WTC11 (cell line): ENCODE measurements at regions of chr6 and their contacts with region 1.

Region 1: DNA sequence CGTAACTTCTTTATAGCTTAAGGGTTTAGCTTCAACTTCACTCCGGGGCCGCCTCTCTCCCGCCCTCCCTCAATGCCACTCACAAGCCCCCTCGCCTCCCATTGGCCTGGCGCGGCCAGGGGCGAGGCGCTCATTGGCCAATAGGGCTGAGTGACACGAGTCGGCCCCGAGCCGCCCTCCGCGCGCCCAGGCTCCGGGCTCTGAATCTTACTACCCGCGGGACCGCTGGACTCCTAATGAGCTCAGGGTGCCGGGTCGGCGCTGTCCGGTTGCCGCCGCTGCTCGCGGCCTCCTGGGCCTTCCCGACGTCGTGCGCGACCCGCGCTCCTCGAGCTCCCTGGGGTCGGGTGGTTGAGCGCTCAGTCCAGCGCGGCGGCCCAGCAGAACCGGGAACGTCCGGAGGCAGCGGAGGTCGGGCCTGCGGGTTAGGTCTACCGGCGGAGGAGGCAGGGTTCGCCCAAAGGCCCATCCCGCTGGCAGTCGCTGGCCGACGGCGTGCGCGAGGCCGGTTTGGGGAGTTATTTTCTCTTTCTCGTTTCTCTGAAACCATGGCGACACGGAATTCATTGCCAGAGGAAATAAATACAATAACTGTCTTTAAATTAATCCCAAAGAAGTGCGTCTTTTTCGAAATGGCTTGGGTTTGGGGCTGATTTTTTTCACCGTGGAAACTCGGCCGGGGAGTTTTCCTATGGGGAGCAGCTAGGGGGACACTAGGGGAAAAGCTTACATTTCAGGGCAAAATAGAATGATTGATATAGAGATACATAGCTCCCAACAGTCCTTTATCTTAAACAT is at the start of gene SIM1:
- DNase-seq: peak; percentile 93
- ATAC-seq: peak; percentile 89
- H3K4me3 Mint-ChIP-seq: peak within 1 kb of the TSS; percentile 71
- H3K27ac Mint-ChIP-seq: no peak within 1 kb of the TSS
- H3K4me1 Mint-ChIP-seq: peaks cover 68% of the 10 kb centered on the region
- H3K27me3 Mint-ChIP-seq: no peaks in the 10 kb centered on the region; the same call in 1 of the 2 replicates
- CTCF ChIP-seq: no peak
- total RNA-seq, gene SIM1: 0.09 to 0.11 TPM (median 0.11 TPM) in 3 replicates

Region 2: DNA sequence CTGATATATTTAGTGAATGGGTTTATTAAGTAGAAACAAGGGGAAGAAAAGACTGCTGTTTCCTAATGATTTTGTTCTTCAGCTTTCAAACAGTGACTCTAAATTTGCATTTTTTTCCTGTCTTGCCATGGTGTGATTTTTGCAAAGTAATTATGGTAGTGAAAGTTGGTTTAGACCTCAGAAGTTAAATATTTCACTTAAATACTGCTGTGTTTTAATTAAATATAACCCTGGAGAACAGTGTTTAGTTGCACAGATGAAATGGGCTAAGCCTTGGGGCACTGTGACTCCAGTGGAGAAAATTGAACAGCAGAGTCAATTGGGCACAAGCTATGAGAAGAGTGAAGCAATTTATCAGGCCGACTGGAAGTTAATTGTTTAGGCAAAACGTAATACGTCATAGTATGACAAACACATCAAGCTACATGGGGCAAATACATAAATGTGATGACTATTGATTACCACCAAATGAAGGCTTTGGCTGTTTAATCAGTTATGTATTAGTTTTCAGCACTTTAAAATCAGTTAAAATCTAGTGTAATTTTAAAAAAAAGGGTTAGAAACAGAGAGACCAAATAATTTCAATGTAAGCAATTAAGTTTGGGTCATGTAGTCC is 359.9 kb before region 1 on chr6:
- CTCF ChIA-PET with region 1: interaction called, 19 read pairs
- POLR2A ChIA-PET with region 1: no interaction called
- DNase-seq: no peak
- ATAC-seq: no peak
- H3K4me3 Mint-ChIP-seq: no peak overlapping the region
- H3K27ac Mint-ChIP-seq: no peak overlapping the region
- H3K4me1 Mint-ChIP-seq: peaks cover 17% of the 10 kb centered on the region
- H3K27me3 Mint-ChIP-seq: no peaks in the 10 kb centered on the region
- CTCF ChIP-seq: no peak

Region 3: GRCh38 chr6:100176311-100176950 is 288.7 kb before region 1 on chr6:
- CTCF ChIA-PET with region 1: interaction called, 12 read pairs
- POLR2A ChIA-PET with region 1: no interaction called
- DNase-seq: no peak
- ATAC-seq: peak; percentile 75
- H3K4me3 Mint-ChIP-seq: no peak overlapping the region
- H3K27ac Mint-ChIP-seq: no peak overlapping the region
- H3K4me1 Mint-ChIP-seq: peaks cover 42% of the 10 kb centered on the region
- H3K27me3 Mint-ChIP-seq: no peaks in the 10 kb centered on the region
- CTCF ChIP-seq: no peak

Region 4: GRCh38 chr6:100420711-100421110 is 44.4 kb before region 1 on chr6:
- CTCF ChIA-PET with region 1: interaction called, 10 read pairs
- POLR2A ChIA-PET with region 1: no interaction called
- DNase-seq: peak; percentile 22
- ATAC-seq: peak; percentile 99
- H3K4me3 Mint-ChIP-seq: peak overlapping the region; percentile 14; the same call in 1 of the 2 replicates
- H3K27ac Mint-ChIP-seq: no peak overlapping the region
- H3K4me1 Mint-ChIP-seq: peaks cover 25% of the 10 kb centered on the region
- H3K27me3 Mint-ChIP-seq: no peaks in the 10 kb centered on the region
- CTCF ChIP-seq: no peak

Region 5: GRCh38 chr6:100475554-100475953 is 10.5 kb after region 1 on chr6:
- CTCF ChIA-PET with region 1: interaction called, 26 read pairs
- POLR2A ChIA-PET with region 1: no interaction called
- DNase-seq: no peak
- ATAC-seq: no peak
- H3K4me3 Mint-ChIP-seq: no peak overlapping the region
- H3K27ac Mint-ChIP-seq: no peak overlapping the region
- H3K4me1 Mint-ChIP-seq: no peaks in the 10 kb centered on the region
- H3K27me3 Mint-ChIP-seq: peaks cover 3% of the 10 kb centered on the region
- CTCF ChIP-seq: no peak

Region 6: DNA sequence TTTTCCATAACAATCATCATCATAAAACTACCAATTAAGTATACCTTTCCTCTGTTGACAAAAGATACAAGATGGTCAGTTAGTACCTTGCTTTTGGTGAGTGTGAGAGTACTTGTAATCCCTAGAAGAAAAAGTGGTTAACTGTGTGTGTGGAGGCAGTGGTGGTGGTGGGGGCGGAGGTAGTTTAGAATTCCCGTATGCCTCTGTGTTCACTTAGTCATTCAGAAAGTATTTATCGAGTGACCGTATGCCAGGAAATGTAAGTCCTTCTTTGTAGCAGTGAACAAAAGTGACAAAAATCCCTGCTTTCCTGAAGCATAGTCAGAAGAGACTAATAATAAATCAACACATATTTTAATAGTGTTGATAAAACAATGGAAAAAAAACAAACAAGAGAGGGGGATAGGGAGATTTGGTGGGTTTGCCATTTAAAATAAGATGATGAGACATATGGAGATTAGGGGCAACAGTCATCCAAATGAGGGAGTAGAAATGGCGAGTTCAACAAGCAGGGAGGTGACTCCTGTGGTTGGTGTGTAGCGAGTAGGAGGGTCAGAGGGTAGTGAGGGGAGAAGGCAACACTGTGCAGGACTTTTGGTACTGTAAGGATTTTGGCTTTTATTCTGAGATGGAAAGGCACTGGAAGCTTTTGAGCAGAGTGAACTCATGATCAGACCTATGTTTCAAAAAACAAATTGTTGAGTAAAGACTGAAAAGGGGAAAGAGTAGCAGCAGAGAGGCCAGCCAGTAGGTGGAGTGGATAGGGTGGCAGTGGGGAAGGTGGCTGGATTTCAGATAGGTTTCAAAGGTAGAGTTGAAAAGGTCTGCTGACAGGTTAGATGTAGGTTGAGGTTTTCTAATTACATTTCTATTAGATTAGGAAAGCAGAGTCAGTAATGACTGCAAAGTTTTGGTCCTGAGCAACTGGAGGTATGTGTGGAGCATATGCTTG is 40.0 kb after region 1 on chr6:
- CTCF ChIA-PET with region 1: no interaction called
- POLR2A ChIA-PET with region 1: no interaction called
- DNase-seq: no peak
- ATAC-seq: peak; percentile 74
- H3K4me3 Mint-ChIP-seq: no peak overlapping the region
- H3K27ac Mint-ChIP-seq: no peak overlapping the region
- H3K4me1 Mint-ChIP-seq: no peaks in the 10 kb centered on the region
- H3K27me3 Mint-ChIP-seq: no peaks in the 10 kb centered on the region
- CTCF ChIP-seq: no peak

Region 7: GRCh38 chr6:100549406-100550167 is 84.5 kb after region 1 on chr6:
- CTCF ChIA-PET with region 1: no interaction called
- POLR2A ChIA-PET with region 1: no interaction called
- DNase-seq: no peak
- ATAC-seq: no peak
- H3K4me3 Mint-ChIP-seq: no peak overlapping the region
- H3K27ac Mint-ChIP-seq: no peak overlapping the region
- H3K4me1 Mint-ChIP-seq: 0 out of 2 replicates have a peak, but pooled peaks cover 3% of the 10 kb centered on the region
- H3K27me3 Mint-ChIP-seq: no peaks in the 10 kb centered on the region
- CTCF ChIP-seq: no peak

Region 8: DNA sequence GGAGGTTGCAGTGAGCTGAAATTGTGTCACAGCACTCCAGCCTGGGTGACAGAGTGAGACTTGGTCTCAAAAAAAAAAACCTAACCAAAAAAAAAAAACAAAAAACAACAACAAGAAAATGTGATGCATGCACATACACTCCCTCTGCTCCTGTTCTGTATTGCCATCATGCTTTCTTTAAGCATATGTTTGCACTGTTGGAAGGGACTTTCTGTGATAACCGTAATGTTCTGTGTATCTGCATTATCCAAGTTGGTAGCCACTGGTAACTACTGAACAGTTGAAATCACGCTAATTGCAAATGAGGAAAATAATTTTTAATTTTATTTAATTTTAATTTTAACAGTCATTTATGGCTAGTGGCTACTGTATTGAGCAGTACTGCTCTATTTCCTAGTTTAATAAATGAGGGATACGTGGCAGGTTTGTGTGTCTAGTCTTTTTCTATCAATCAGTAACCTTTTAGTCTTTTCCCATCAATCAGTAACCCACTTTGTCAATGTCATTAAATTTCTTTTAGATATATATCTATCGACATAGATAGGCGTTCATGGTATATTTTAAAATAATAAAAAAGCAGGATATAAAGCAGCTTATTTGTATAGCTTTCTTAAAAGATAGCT is 280.4 kb after region 1 on chr6:
- CTCF ChIA-PET with region 1: no interaction called
- POLR2A ChIA-PET with region 1: no interaction called
- DNase-seq: no peak
- ATAC-seq: no peak
- H3K4me3 Mint-ChIP-seq: no peak overlapping the region
- H3K27ac Mint-ChIP-seq: no peak overlapping the region
- H3K4me1 Mint-ChIP-seq: no peaks in the 10 kb centered on the region
- H3K27me3 Mint-ChIP-seq: no peaks in the 10 kb centered on the region
- CTCF ChIP-seq: no peak